ENCODE measurements at regions of chr13 and their contacts with region 1.

Region 1: DNA sequence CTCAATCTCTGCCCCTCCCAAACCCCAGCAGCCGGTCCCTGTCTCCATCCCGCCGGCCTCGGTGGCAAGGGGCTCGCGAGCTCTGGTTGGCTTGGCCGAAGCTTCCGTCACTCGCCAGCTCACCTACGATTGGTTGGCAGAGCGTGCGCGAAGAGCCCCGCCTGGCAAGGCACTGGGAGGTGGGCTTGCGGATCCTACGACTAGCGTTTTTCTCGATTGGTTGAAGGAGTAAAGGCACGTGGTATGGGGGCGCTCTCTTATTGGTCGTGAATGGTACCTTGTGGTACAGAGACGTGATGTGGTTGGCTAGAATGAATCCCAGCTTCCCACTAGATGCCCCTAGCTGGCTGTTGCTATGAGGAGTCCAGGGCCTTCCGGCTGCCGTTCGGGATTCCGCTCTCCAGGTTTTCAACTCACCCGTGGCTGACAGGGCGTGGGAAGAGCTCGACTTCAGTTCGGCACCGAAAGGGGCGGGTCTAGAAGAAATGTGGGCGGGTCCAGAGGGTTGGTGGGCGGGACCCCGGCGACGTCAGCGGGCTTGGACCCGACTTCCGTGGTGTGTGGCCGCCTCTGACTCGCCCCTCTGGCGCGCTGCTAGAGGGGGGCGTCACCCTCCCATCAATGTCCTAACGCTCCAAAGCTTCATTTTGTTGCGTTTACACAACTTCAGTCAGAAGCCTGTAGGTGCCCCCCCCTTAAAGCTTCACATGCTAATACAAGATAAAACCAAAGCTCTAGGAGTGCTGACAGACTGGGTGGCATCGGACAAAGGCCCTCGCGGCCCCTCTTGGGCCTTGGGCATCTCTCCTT is 847 bp upstream of the RAP2A start:
- DNase-seq: peak; percentile 99 to 100
- H3K4me3 ChIP-seq: peak overlapping the region; percentile 100
- H3K27ac ChIP-seq: peak overlapping the region; percentile 99
- H3K4me1 ChIP-seq: peaks cover 25% of the 10 kb centered on the region
- H3K27me3 ChIP-seq: no peaks in the 10 kb centered on the region
- CTCF ChIP-seq: no peak

Region 2: DNA sequence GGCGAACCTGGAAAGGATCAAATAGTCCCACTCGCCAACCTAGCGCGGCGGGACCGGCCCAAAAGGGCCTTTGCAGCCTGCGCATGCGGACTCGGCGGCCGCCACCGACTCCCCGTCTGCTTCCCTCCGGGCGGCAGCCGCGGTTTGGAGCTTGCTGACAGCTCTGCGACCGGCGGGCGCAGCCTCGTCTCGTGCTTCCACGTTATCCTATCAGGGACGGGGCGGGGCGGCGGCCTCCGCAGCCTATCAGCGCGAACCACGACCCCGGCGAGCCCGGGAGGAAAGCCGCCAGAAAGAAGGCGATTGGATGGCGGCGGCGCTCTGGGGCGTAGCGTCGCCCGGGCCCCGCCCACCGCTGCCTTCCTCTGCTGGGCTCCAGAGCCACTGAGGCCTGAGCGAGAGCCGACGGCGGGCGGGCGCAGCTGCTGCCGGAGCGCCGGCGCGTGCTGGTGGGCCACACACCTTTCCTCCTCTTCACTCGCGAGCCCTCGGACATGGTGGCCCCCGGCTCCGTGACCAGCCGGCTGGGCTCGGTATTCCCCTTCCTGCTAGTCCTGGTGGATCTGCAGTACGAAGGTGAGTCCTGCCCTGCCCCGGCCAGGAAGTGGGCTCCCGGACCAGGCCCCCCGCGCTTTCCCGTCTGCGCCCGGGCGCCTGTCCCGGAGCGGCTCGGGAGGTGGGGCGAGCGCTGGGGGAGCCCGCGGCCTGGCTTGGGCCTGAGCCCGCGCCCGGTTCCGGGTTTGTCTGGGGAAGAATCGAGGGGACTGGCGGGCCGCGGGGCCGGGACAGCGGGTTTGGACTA is 1756.2 kb before region 1 on chr13 and contains the start of gene DNAJC3:
- CTCF ChIA-PET with region 1: no interaction called
- POLR2A ChIA-PET with region 1: no interaction called
- intact Hi-C with region 1: loop called (anchors 2 kb)
- DNase-seq: peak; percentile 92 to 98
- H3K4me3 ChIP-seq: peak within 1 kb of the TSS; percentile 84
- H3K27ac ChIP-seq: peak within 1 kb of the TSS; percentile 92
- H3K4me1 ChIP-seq: peaks cover 33% of the 10 kb centered on the region
- H3K27me3 ChIP-seq: no peaks in the 10 kb centered on the region
- CTCF ChIP-seq: no peak
- total RNA-seq, gene DNAJC3: 8.1 and 10.5 TPM in 2 replicates

Region 3: GRCh38 chr13:97018029-97018831 is 414.9 kb before region 1 on chr13:
- CTCF ChIA-PET with region 1: no interaction called
- POLR2A ChIA-PET with region 1: no interaction called
- intact Hi-C with region 1: loop called (anchors 2 kb)
- DNase-seq: peak; percentile 30 to 57
- H3K4me3 ChIP-seq: no peak overlapping the region
- H3K27ac ChIP-seq: no peak overlapping the region
- H3K4me1 ChIP-seq: no peaks in the 10 kb centered on the region; the same call in 1 of the 2 replicates
- H3K27me3 ChIP-seq: no peaks in the 10 kb centered on the region
- CTCF ChIP-seq: peak; percentile 93

Region 4: DNA sequence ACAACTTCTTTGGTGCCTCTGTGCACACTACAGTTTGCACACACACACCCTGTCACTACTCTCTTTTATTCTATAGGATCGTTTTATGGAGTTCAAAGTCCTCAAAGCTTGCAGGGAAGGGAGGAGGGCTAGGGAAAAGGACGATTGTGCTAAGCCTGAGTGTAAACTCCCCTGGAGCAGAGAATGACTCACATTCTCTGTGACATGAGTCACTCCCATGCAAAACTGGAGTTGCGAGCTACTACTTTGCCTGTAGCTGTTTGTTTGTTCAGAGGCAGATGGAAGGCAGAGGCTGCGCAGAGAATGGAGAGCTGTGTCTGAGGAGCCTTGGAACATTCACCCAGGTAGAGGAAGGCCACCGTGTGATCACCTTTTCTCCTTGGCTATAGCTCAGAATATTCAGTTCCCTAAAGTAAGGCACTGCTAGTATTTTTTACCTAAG is 291.5 kb before region 1 on chr13:
- CTCF ChIA-PET with region 1: no interaction called
- POLR2A ChIA-PET with region 1: interaction called, 22 read pairs
- intact Hi-C with region 1: no loop called
- DNase-seq: peak; percentile 70 to 95
- H3K4me3 ChIP-seq: peak overlapping the region; percentile 62
- H3K27ac ChIP-seq: peak overlapping the region; percentile 79
- H3K4me1 ChIP-seq: peaks cover 51% of the 10 kb centered on the region
- H3K27me3 ChIP-seq: no peaks in the 10 kb centered on the region
- CTCF ChIP-seq: no peak

Region 5: DNA sequence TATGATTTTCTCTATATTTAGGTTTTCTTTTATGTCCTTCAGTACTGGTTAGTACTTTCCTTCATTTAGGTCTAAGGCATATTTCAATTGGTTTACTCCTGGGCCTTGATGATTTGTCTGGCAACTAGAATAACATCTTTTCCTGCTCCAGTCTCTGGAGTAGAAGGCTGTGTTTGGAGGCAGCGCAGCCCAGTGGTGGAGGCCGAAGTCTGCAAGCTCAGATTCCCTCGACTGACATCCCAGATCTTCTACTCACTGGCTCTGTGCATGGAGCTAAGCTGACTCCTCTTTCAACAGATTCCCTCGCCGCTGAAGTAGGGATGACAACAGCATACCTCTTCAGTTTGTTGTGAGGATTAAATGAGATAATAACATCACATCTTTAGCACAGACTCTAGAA is 141.8 kb after region 1 on chr13:
- CTCF ChIA-PET with region 1: no interaction called
- POLR2A ChIA-PET with region 1: no interaction called
- intact Hi-C with region 1: loop called (anchors 10 kb)
- DNase-seq: peak in 1 of 2 experiments; percentile 19
- H3K4me3 ChIP-seq: no peak overlapping the region
- H3K27ac ChIP-seq: no peak overlapping the region
- H3K4me1 ChIP-seq: no peaks in the 10 kb centered on the region
- H3K27me3 ChIP-seq: no peaks in the 10 kb centered on the region
- CTCF ChIP-seq: peak; percentile 70

Measured in PC-9 (cell line).